SK-N-SH (cell line): ENCODE measurements at regions of chr3 and their contacts with region 1.

Region 1: GRCh38 chr3:73284472-73284871 is 223.0 kb downstream of the EBLN2 start:
- DNase-seq: no peak
- H3K4me3 ChIP-seq: no peak overlapping the region
- H3K27ac ChIP-seq: no peak overlapping the region
- H3K4me1 ChIP-seq: no peaks in the 10 kb centered on the region; a peak in 1 of 4 replicates
- H3K27me3 ChIP-seq: no peaks in the 10 kb centered on the region
- CTCF ChIP-seq: no peak
- EP300 ChIP-seq: no peak
- RAD21 ChIP-seq: no peak

Region 2: DNA sequence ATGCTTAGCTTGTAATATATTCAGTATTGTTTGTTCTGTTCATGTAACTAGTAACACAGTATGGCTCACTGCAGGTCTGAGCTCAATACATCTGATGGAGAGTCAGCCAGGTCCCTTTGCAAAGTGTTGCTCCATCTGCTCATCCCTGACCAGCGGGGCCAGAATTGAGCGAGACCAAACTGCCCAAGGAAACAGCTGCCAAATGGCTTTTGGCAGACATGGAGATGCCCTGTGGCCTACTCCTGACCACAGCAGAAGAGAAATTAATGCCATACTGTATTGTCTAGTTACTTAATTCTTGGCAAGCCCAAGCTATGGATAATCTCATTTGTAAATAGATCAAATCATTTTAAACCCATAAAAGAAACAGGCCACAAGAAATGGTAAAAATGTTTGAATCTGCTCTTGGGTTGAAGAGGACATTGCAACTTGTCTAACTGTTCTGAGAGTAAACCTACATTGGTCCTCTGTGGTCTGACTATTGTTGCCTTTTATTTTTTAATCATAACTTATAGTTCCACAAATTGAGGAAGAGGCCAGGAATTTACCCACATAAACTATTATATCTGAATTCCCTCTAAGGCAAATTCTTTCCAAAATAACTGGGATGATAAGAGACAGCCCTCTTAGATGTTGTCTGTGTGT is 13.5 kb before region 1 on chr3:
- CTCF ChIA-PET with region 1: interaction called, 10 read pairs
- POLR2A ChIA-PET with region 1: no interaction called
- DNase-seq: peak; percentile 69
- H3K4me3 ChIP-seq: no peak overlapping the region
- H3K27ac ChIP-seq: peak overlapping the region in 1 of 2 experiments; percentile 94; a peak in 2 of 4 replicates
- H3K4me1 ChIP-seq: peaks cover 0 to 11% of the 10 kb centered on the region in 2 experiments; a peak in 2 of 4 replicates
- H3K27me3 ChIP-seq: no peaks in the 10 kb centered on the region
- CTCF ChIP-seq: no peak
- EP300 ChIP-seq: peak in 1 of 2 experiments; percentile 83; a peak in 2 of 4 replicates
- RAD21 ChIP-seq: peak; percentile 40

Region 3: DNA sequence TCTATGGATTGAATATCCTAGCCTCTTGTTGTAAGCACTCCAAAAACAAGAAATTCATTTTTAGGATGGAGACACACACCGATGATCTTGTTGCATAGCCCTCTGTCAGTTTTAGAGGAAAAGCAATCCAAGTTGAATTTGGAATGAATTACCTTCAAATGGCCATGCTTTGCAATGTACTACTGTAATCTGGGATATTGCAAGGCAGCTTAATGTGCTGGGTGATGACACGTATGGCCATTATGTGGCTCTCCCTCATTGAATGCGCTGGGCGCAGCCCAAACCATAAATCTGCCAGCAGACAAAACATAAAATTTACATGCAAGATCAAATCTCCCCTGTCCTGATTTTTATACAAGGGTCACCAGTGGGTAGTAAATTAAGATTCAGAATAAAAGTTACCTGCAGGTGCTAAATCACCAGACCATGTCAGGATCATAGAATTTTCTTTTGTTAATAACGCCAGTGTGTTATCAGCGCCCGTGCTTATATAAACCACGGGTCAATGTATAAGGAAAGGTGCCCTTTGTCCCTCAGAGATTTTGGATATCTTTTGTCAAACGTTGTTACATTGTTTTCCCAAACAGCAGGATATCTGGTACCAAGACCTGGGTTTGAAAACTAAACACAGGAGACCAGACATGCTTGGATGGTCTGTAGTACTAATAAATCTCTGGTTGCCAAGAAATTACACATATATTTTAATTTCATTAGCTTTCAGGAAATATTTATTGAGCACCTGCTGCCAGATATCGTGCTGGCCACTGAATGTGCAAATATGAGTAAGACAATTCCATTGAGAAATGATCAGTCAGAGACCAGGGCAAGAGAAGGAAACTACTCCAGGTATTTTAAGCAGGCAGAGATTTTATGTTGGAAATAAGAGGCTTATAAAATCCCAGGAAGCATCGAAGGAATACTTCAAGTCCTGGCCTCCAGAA is 14.0 kb after region 1 on chr3:
- CTCF ChIA-PET with region 1: no interaction called
- POLR2A ChIA-PET with region 1: no interaction called
- DNase-seq: no peak
- H3K4me3 ChIP-seq: no peak overlapping the region
- H3K27ac ChIP-seq: no peak overlapping the region
- H3K4me1 ChIP-seq: peaks cover 0 to 5% of the 10 kb centered on the region in 2 experiments; a peak in 1 of 4 replicates
- H3K27me3 ChIP-seq: peaks cover 14% of the 10 kb centered on the region; the same call in 1 of the 2 replicates
- CTCF ChIP-seq: no peak
- EP300 ChIP-seq: peak in 1 of 2 experiments; percentile 47; a peak in 1 of 4 replicates
- RAD21 ChIP-seq: no peak

Region 4: GRCh38 chr3:73365756-73366397 is 81.4 kb after region 1 on chr3:
- CTCF ChIA-PET with region 1: no interaction called
- POLR2A ChIA-PET with region 1: no interaction called
- DNase-seq: no peak
- H3K4me3 ChIP-seq: no peak overlapping the region
- H3K27ac ChIP-seq: peak overlapping the region in 1 of 2 experiments; percentile 14; a peak in 1 of 4 replicates
- H3K4me1 ChIP-seq: peaks cover 0 to 12% of the 10 kb centered on the region in 2 experiments; a peak in 1 of 4 replicates
- H3K27me3 ChIP-seq: no peaks in the 10 kb centered on the region
- CTCF ChIP-seq: no peak
- EP300 ChIP-seq: no peak
- RAD21 ChIP-seq: no peak

Region 5: DNA sequence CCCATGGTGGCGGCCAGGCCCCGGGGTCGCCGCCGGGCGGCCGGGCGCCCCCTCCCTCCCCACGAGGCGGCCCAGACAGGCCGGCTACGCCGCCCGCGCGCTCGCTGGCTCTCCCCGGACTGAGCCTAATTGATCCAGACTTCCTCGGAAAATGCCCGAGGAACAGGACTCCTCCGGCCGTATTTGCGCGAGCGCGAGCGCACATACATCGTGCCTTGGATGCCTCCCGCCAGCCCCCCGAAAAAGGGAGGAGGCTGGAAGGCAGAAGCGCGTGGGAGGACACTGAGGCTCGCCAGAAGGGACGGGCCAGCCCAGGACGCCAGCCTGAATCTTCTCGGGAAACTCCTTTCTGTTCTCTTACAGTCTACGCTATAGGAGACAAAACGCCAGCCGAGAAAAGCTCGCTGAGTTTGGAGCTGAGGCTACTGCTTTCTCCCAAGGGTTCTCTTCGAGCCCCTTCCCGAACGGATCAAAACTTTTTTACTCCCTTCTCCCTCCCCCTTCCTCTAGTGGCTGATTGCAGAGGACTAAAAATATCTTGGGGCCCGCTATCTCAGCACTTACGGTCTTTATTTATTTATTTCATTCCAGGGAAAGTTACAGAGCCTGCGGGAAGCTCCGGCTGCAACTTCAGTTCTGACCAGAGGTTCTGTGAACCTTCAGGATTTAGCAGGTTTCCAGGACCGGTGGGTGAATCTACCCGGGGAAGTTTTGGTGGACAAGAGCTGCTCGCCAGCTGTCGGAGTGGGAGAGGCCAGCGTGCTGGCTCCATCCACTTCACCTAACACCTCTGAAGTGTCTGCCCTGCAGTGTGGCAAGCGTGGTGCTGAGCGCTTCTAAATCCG is 340.6 kb after region 1 on chr3 and contains the start of gene PDZRN3:
- CTCF ChIA-PET with region 1: no interaction called
- POLR2A ChIA-PET with region 1: no interaction called
- DNase-seq: peak; percentile 54
- H3K4me3 ChIP-seq: peak within 1 kb of the TSS; percentile 76 to 87
- H3K27ac ChIP-seq: peak within 1 kb of the TSS; percentile 74 to 86
- H3K4me1 ChIP-seq: peaks cover 0 to 37% of the 10 kb centered on the region in 2 experiments; a peak in 2 of 4 replicates
- H3K27me3 ChIP-seq: no peaks in the 10 kb centered on the region
- CTCF ChIP-seq: 0 out of 2 replicates have a peak, but pooled peaks have one; percentile 8
- EP300 ChIP-seq: peak in 1 of 2 experiments; percentile 32; a peak in 1 of 4 replicates
- RAD21 ChIP-seq: peak; percentile 13; the same call in 1 of the 2 replicates
- polyA plus RNA-seq, gene PDZRN3: 7.9 and 10.3 TPM in 2 replicates